Mammary epithelial cell (primary cell): ENCODE measurements at regions of chr10 and their contacts with region 1.

Region 1: DNA sequence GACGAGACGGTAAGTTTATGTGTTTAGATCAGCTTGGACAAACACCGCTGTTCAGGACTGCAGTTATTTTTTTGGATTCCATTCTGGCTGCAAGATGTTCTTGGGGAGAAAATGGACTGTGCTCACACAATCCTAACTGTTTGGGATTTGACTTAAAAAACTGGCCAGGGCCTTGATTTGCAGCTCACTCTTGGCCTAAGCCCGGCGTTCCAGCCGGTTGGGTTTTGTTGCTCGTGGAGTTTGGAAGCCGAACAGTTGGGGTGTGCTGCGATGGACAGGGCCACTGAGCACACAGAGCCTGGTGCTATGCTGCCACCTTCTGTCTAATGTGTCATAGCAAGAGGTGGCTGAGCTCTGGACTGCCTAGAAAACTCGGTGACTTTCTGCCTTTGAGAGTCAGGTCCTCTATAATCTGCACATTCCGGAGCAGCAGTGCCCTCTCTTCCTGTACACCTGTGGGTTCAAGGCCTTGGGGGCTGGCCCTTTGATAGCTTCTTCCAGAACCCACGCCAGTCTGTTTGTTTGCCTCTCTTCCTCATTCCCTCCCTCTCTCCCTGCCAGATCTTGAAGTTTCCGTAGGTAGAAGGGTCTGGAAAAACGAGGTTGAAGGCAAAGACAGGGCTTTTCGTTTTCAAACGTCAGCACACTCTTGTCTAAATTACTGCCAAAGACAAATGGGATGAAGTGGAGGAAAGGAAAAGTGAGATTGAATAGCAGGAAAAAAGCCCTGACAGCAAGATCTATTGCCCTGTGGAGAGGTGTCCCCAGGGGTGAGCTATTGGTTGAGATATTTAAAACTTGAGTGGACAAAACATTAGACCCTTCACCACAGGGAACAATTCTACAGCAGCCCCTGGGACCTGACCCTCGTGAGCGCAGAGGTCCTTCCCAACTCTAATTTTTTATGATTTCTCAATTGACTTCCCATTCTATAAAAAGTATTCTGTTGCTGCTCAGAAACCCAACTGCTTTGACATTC is 167.5 kb upstream of the HABP2 start:
- DNase-seq: peak; percentile 68
- H3K4me3 ChIP-seq: no peak overlapping the region
- H3K27ac ChIP-seq: no peak overlapping the region
- H3K4me1 ChIP-seq: no peaks in the 10 kb centered on the region
- H3K27me3 ChIP-seq: peaks cover 5% of the 10 kb centered on the region
- CTCF ChIP-seq: peak; percentile 68 to 92

Region 2: GRCh38 chr10:112471878-112472487 is 913.3 kb before region 1 on chr10:
- CTCF ChIA-PET with region 1: no interaction called
- dilution Hi-C with region 1: no loop called
- in situ Hi-C with region 1: no loop called
- intact Hi-C with region 1: loop called (anchors 1 kb)
- DNase-seq: peak; percentile 28
- H3K4me3 ChIP-seq: no peak overlapping the region
- H3K27ac ChIP-seq: no peak overlapping the region
- H3K4me1 ChIP-seq: no peaks in the 10 kb centered on the region
- H3K27me3 ChIP-seq: no peaks in the 10 kb centered on the region
- CTCF ChIP-seq: peak; percentile 67 to 68

Region 3: GRCh38 chr10:112565434-112566053 is 819.8 kb before region 1 on chr10:
- CTCF ChIA-PET with region 1: no interaction called
- dilution Hi-C with region 1: no loop called
- in situ Hi-C with region 1: loop called in 1 of 2 experiments (anchors 25 kb)
- intact Hi-C with region 1: loop called (anchors 1 kb)
- DNase-seq: peak; percentile 53
- H3K4me3 ChIP-seq: no peak overlapping the region
- H3K27ac ChIP-seq: no peak overlapping the region
- H3K4me1 ChIP-seq: no peaks in the 10 kb centered on the region
- H3K27me3 ChIP-seq: no peaks in the 10 kb centered on the region
- CTCF ChIP-seq: peak; percentile 77 to 82

Region 4: GRCh38 chr10:112721080-112721698 is 664.1 kb before region 1 on chr10:
- CTCF ChIA-PET with region 1: no interaction called
- dilution Hi-C with region 1: no loop called
- in situ Hi-C with region 1: no loop called
- intact Hi-C with region 1: loop called (anchors 1 kb)
- DNase-seq: no peak
- H3K4me3 ChIP-seq: no peak overlapping the region
- H3K27ac ChIP-seq: no peak overlapping the region
- H3K4me1 ChIP-seq: peaks cover 10% of the 10 kb centered on the region
- H3K27me3 ChIP-seq: no peaks in the 10 kb centered on the region
- CTCF ChIP-seq: peak; percentile 54 to 62

Region 5: DNA sequence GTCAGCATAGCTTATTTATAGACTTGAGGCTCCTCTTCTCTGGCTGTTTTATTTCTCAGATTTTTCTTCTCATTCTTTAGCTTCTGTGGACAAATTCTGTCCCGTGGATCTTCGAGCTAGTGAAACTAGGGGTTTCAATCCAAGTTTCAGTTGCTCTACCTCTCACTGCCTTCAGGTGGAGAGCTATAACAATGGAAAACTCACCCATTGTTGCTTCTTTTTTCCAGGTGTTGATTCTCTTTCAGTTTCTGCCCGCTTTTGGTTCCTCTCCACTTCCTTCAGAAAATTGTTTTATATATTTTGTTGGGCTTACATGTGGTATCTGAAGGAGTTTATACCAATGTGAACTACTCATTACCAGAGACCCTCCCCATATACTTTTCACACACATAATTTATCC is 169.2 kb before region 1 on chr10:
- CTCF ChIA-PET with region 1: no interaction called
- dilution Hi-C with region 1: no loop called
- in situ Hi-C with region 1: no loop called
- intact Hi-C with region 1: loop called (anchors 1 kb)
- DNase-seq: peak; percentile 12
- H3K4me3 ChIP-seq: no peak overlapping the region
- H3K27ac ChIP-seq: no peak overlapping the region
- H3K4me1 ChIP-seq: no peaks in the 10 kb centered on the region
- H3K27me3 ChIP-seq: peaks cover 3% of the 10 kb centered on the region
- CTCF ChIP-seq: peak; percentile 33 to 62

Region 6: GRCh38 chr10:113326160-113327111 is 58.9 kb before region 1 on chr10:
- CTCF ChIA-PET with region 1: no interaction called
- dilution Hi-C with region 1: no loop called
- in situ Hi-C with region 1: no loop called
- intact Hi-C with region 1: no loop called
- DNase-seq: peak; percentile 71
- H3K4me3 ChIP-seq: no peak overlapping the region
- H3K27ac ChIP-seq: no peak overlapping the region
- H3K4me1 ChIP-seq: peaks cover 10% of the 10 kb centered on the region
- H3K27me3 ChIP-seq: no peaks in the 10 kb centered on the region
- CTCF ChIP-seq: peak in 1 of 2 donors; percentile 10

Region 7: DNA sequence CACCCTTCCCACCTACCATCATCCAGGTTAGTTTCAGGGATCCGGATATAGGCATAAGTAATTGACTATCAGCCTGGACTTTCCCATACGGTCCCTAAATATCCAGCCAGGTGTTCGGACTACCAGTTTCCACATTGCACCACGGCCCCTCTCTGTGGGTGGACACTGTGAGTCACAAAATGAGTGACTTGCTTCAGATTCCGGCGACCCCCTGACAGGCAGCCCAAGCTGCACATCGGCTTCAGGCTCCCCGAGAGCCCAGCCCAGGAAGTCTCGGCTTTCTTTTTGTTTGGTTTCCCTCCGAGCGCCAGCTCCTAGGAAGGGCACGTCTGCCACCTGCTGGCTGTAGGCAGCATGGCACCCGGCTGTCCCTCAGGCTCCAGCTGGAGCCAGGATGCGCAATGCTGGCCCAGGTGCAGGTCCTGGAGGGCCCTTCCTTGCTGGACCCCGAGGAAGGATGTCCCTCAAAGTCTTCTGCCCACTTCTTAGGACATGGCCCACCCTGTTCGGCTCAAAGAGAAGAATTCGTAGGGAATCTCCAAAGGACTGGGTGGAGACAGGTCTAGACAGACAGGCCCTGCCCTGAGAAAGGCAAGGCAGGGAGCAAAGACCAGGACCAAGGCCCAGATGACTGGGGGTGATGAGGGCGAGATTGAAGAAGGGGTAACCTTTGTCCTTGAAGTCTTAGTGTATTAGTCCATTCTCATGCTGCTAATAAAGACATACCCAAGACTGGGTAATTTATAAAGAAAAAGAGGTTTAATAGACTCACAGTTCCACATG is 178.2 kb after region 1 on chr10:
- CTCF ChIA-PET with region 1: no interaction called
- dilution Hi-C with region 1: no loop called
- in situ Hi-C with region 1: no loop called
- intact Hi-C with region 1: loop called (anchors 1 kb)
- DNase-seq: peak; percentile 48
- H3K4me3 ChIP-seq: peak overlapping the region; percentile 29 to 43 (median 41)
- H3K27ac ChIP-seq: no peak overlapping the region
- H3K4me1 ChIP-seq: peaks cover 3% of the 10 kb centered on the region
- H3K27me3 ChIP-seq: no peaks in the 10 kb centered on the region
- CTCF ChIP-seq: peak; percentile 98